ENCODE measurements at regions of chr6 and their contacts with region 1.

Region 1: GRCh38 chr6:188821-189655 is 103.2 kb upstream of the DUSP22 start:
- DNase-seq: peak; percentile 81
- ATAC-seq: peak; percentile 68
- H3K4me3 ChIP-seq: no peak overlapping the region
- H3K4me3 Mint-ChIP-seq: no peak overlapping the region
- H3K27ac ChIP-seq: no peak overlapping the region
- H3K27ac Mint-ChIP-seq: peak overlapping the region; percentile 10
- H3K4me1 ChIP-seq: peaks cover 62 to 80% of the 10 kb centered on the region in 2 donors
- H3K4me1 Mint-ChIP-seq: peaks cover 75% of the 10 kb centered on the region
- H3K27me3 ChIP-seq: no peaks in the 10 kb centered on the region
- H3K27me3 Mint-ChIP-seq: no peaks in the 10 kb centered on the region
- CTCF ChIP-seq: peak; percentile 82

Region 2: GRCh38 chr6:227074-227782 is 38.2 kb after region 1 on chr6:
- CTCF ChIA-PET with region 1: interaction called, 49 read pairs
- POLR2A ChIA-PET with region 1: no interaction called
- intact Hi-C with region 1: no loop called
- DNase-seq: peak; percentile 78
- ATAC-seq: peak; percentile 92
- H3K4me3 ChIP-seq: no peak overlapping the region
- H3K4me3 Mint-ChIP-seq: peak overlapping the region; percentile 42
- H3K27ac ChIP-seq: no peak overlapping the region
- H3K27ac Mint-ChIP-seq: peak overlapping the region; percentile 20
- H3K4me1 ChIP-seq: peaks cover 28 to 34% of the 10 kb centered on the region in 2 donors
- H3K4me1 Mint-ChIP-seq: peaks cover 43% of the 10 kb centered on the region
- H3K27me3 ChIP-seq: no peaks in the 10 kb centered on the region
- H3K27me3 Mint-ChIP-seq: no peaks in the 10 kb centered on the region
- CTCF ChIP-seq: peak; percentile 45

Region 3: GRCh38 chr6:399785-400534 is 210.9 kb after region 1 on chr6:
- CTCF ChIA-PET with region 1: interaction called, 48 read pairs
- POLR2A ChIA-PET with region 1: no interaction called
- intact Hi-C with region 1: no loop called
- DNase-seq: peak; percentile 89
- ATAC-seq: peak; percentile 70
- H3K4me3 ChIP-seq: peak overlapping the region in 1 of 5 experiments; percentile 7
- H3K4me3 Mint-ChIP-seq: peak overlapping the region; percentile 69
- H3K27ac ChIP-seq: peak overlapping the region; percentile 75 to 84
- H3K27ac Mint-ChIP-seq: peak overlapping the region; percentile 87
- H3K4me1 ChIP-seq: peaks cover 76 to 87% of the 10 kb centered on the region in 2 donors
- H3K4me1 Mint-ChIP-seq: peaks cover 89% of the 10 kb centered on the region
- H3K27me3 ChIP-seq: no peaks in the 10 kb centered on the region
- H3K27me3 Mint-ChIP-seq: no peaks in the 10 kb centered on the region
- CTCF ChIP-seq: no peak

Region 4: DNA sequence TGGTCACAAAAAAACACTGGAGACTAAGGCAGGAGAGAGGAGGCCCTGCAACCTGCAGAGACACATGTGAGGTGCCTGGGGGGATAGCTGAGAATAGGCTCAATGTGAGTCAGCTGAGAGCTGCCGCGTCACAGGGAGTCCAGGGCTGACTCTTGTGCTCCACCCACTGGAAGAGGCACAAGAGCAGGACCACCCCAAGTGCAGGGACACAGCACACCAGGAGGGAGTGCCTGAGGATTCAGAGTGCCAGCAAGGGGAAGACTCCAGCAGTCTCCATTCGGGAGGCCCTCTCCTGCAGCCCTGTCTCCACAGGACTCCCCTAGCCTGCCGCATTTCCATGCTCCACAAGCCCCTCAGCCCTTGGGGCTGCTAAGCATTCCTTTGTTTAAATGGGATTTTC is 362.4 kb after region 1 on chr6:
- CTCF ChIA-PET with region 1: interaction called, 16 read pairs
- POLR2A ChIA-PET with region 1: no interaction called
- intact Hi-C with region 1: loop called (anchors 2 kb)
- DNase-seq: peak; percentile 16
- ATAC-seq: peak; percentile 43
- H3K4me3 ChIP-seq: no peak overlapping the region
- H3K4me3 Mint-ChIP-seq: no peak overlapping the region
- H3K27ac ChIP-seq: no peak overlapping the region
- H3K27ac Mint-ChIP-seq: no peak overlapping the region
- H3K4me1 ChIP-seq: no peaks in the 10 kb centered on the region
- H3K4me1 Mint-ChIP-seq: no peaks in the 10 kb centered on the region
- H3K27me3 ChIP-seq: no peaks in the 10 kb centered on the region
- H3K27me3 Mint-ChIP-seq: no peaks in the 10 kb centered on the region
- CTCF ChIP-seq: no peak